ENCODE measurements at regions of chr9 and their contacts with region 1.

Region 1: DNA sequence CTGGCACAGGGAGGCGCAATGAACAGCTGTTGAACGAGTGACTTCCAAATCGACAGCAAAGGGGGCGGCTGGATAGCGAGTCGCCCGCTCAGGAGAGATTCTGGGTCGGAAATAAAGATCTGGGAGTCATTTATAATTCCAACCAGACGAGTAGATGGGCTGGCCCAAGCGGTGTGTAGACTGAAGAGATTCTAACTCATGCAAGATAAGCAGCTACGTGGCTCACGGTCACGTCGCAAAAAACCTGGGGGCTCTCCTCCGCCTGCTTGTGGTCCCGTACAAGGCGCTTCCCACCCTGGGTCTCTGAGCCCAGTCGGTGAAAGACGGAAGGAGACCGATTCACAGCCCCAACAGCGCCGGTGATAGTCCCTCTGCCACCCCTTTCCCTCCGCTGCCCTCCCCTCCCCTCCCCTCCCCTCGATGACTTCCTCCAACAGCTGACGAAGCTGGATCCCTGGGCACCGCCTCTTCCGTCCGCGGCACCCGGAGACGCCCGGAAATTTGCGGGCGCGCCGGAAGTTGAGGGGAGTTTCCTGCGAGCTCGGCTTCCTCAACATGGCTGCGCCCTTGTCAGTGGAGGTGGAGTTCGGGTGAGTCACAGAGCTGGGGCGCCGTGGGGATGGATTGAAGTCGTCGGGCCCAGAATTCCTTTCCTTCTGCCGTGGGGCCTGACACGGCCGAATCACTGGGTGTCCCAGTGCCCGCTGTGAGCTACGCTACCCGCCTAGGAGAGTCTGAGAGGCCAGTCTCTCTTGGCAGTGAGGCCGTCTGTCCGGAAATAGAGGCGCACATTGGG is at the start of gene URM1:
- DNase-seq: peak; percentile 98
- H3K4me3 ChIP-seq: peak within 1 kb of the TSS; percentile 72 to 95 (median 87)
- H3K27ac ChIP-seq: peak within 1 kb of the TSS; percentile 82
- H3K4me1 ChIP-seq: peaks cover 17% of the 10 kb centered on the region
- H3K27me3 ChIP-seq: no peaks in the 10 kb centered on the region
- CTCF ChIP-seq: peak in 1 of 2 donors; percentile 6
- POLR2A ChIP-seq: peak; percentile 91
- total RNA-seq, gene URM1: 100 and 101 TPM in 2 replicates

Region 2: DNA sequence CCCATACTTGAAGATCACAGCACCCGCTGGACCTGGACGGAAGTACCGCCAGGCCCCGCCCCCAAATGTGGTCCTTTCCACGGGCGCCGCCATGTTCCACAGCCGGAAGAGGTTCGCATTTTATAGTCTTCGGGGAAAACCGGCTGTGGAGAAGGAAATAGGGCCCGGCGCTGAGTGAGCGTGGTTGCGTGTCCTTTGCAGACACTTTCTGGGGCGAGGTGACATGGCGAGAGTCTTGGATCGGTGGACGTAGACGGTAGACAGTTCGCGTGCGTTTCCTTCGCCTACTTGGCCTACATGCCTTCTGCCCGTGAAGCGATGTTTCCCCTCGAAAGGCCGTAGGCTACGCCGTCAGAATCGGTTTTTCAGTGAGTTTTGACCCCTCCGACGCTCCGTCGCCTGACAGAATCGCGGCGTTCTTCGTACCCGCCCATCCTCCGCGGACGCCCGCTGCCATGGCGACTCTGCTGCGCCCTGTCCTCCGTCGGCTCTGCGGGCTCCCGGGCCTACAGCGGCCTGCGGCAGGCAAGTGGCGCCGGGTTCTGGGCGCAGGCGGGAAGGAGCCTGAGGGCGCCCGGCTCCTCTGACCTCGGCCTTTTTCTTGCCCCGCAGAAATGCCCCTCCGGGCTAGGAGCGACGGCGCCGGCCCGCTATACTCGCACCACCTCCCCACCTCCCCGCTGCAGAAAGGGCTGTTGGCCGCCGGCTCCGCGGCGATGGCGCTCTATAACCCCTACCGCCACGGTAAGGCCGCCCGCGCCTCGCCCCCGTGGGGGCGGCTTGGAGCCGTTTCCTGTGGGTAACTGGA is 48.4 kb before region 1 on chr9 and contains the starts of genes COQ4 and TRUB2:
- CTCF ChIA-PET with region 1: no interaction called
- POLR2A ChIA-PET with region 1: no interaction called
- dilution Hi-C with region 1: no loop called
- intact Hi-C with region 1: loop called (anchors 2 kb)
- DNase-seq: peak; percentile 95
- H3K4me3 ChIP-seq: peak within 1 kb of the TSS; percentile 83 to 92 (median 83)
- H3K27ac ChIP-seq: peak within 1 kb of the TSS; percentile 56
- H3K4me1 ChIP-seq: peaks cover 12% of the 10 kb centered on the region
- H3K27me3 ChIP-seq: no peaks in the 10 kb centered on the region
- CTCF ChIP-seq: no peak
- POLR2A ChIP-seq: peak; percentile 72
- total RNA-seq, gene COQ4: 44.4 and 46.6 TPM in 2 replicates
- total RNA-seq, gene TRUB2: 35.4 and 39.3 TPM in 2 replicates

Region 3: DNA sequence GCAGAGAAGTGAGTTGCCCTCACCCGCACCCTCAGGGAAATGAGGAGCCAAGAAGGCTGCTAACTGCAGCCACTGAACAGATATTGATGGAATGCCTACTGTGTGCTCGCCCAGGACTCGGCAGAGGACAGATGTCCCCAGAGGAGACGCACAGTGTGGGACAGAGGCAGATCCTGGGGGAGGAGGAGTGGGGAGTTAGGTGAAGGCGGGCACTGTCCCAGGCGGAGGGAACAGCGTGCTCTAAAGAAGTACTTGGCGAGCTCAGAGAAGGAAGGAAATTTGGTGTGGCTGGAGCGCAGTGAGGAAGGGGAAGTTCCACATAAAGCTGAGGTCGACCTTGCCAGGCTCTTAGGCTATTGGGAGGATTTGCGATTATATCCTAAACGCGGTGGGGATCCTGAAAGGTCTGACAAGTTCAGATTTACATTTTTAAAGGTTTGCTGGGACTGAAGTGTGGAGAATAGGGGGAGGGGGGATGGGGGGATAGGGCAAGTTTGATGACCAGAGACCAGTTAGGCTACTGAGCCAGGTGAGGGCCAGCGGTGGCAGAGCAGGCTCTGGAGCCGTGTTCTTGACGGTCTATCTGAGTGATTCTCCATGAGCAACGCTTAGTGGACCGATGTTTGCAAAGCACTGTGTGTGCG is 26.1 kb after region 1 on chr9:
- CTCF ChIA-PET with region 1: interaction called, 10 read pairs
- POLR2A ChIA-PET with region 1: no interaction called
- dilution Hi-C with region 1: no loop called
- intact Hi-C with region 1: no loop called
- DNase-seq: peak; percentile 24
- H3K4me3 ChIP-seq: peak overlapping the region in 1 of 3 experiments; percentile 8
- H3K27ac ChIP-seq: no peak overlapping the region
- H3K4me1 ChIP-seq: peaks cover 5% of the 10 kb centered on the region
- H3K27me3 ChIP-seq: no peaks in the 10 kb centered on the region
- CTCF ChIP-seq: no peak
- POLR2A ChIP-seq: no peak

Region 4: DNA sequence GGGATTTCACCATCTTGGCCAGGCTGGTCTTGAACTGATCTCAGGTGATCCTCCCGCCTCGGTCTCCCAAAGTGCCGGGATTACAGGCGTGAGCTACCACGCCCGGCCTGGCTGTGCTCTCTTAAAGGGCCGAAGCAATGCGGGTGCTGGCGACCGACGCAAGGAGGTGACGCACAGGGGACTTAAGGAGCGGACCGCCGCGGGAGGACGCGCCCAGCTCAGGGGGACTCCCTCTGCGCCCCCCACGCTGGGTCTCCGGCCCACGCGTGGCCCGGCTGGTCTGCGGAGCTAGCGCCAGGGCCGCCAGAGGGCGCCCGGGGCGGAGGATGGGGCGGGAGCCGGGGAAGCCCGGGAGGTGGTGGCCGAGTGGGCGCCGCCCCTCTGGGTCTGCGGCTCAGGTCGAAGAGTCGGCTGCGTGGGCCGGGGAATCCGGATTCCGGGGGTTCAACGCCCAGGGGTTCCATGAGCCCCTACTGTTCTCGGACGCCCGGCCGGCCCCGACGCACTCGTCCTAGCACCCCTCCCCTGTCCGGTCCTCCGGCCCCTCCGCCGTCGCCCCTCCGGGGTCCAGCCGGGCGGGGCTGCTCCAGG is 49.1 kb after region 1 on chr9:
- CTCF ChIA-PET with region 1: interaction called, 19 read pairs
- POLR2A ChIA-PET with region 1: no interaction called
- dilution Hi-C with region 1: no loop called
- intact Hi-C with region 1: no loop called
- DNase-seq: peak; percentile 63
- H3K4me3 ChIP-seq: peak overlapping the region; percentile 53 to 65 (median 59)
- H3K27ac ChIP-seq: no peak overlapping the region
- H3K4me1 ChIP-seq: peaks cover 13% of the 10 kb centered on the region
- H3K27me3 ChIP-seq: peaks cover 6 to 9% of the 10 kb centered on the region in 2 experiments
- CTCF ChIP-seq: peak; percentile 85 to 89
- POLR2A ChIP-seq: peak; percentile 28

Region 5: DNA sequence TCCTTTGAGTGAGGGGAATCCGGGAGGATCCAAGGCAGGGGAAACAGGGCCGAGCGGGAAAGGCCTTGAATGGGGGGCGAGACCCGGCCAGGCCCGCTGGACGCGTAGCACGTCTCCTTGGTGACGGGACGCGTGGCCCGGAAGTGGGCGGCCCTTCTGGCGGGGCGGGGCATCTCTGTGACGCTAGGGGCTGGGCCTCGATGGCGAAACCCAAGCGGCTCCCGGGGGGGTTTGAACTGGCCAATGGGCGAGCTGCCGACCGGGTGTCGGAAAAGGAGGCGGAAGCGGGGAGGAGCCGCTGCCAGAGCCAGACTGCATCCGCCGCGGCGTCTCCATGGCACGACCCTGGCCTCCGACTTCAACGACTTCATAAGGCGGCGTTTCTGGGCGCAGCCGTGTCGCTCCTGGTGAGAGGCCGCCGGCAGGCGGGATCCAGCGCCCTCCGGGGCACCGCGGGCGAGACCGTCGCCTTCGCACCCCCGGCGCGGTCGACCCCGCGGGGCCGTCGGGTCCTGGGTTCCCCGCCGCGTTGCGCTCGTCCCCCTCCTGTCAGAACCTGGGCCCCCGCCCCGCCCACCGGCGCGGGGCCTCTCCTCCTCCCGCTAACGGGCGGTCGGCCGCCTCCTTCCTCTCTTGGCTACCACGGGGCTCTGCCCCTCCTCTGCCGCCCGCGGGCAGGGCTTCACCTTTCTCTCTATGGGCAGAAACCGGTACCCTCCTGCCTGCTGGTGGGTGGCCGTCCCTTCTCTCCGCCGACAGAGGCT is 85.0 kb after region 1 on chr9 and contains the start of gene ODF2:
- CTCF ChIA-PET with region 1: no interaction called
- POLR2A ChIA-PET with region 1: no interaction called
- dilution Hi-C with region 1: no loop called
- intact Hi-C with region 1: loop called (anchors 1 kb)
- DNase-seq: peak; percentile 95
- H3K4me3 ChIP-seq: peak within 1 kb of the TSS; percentile 50 to 66 (median 55)
- H3K27ac ChIP-seq: peak within 1 kb of the TSS; percentile 64
- H3K4me1 ChIP-seq: peaks cover 7% of the 10 kb centered on the region
- H3K27me3 ChIP-seq: no peaks in the 10 kb centered on the region
- CTCF ChIP-seq: no peak
- POLR2A ChIP-seq: peak; percentile 86
- total RNA-seq, gene ODF2: 49.5 and 50.5 TPM in 2 replicates

Region 6: GRCh38 chr9:128696923-128697707 is 326.1 kb after region 1 on chr9:
- CTCF ChIA-PET with region 1: no interaction called
- POLR2A ChIA-PET with region 1: no interaction called
- dilution Hi-C with region 1: no loop called
- intact Hi-C with region 1: no loop called
- DNase-seq: no peak
- H3K4me3 ChIP-seq: no peak overlapping the region
- H3K27ac ChIP-seq: no peak overlapping the region
- H3K4me1 ChIP-seq: peaks cover 6% of the 10 kb centered on the region
- H3K27me3 ChIP-seq: no peaks in the 10 kb centered on the region
- CTCF ChIP-seq: no peak
- POLR2A ChIP-seq: peak; percentile 58